ENCODE measurements at regions of chr16 and their contacts with region 1.

Region 1: GRCh38 chr16:2948807-2949738 is 15.0 kb upstream of the KREMEN2 start:
- DNase-seq: peak in 1 of 9 experiments; percentile 7
- ATAC-seq: no peak
- H3K4me3 ChIP-seq: no peak overlapping the region
- H3K4me3 Mint-ChIP-seq: no peak overlapping the region
- H3K27ac ChIP-seq: no peak overlapping the region
- H3K27ac Mint-ChIP-seq: no peak overlapping the region
- H3K4me1 ChIP-seq: no peaks in the 10 kb centered on the region
- H3K4me1 Mint-ChIP-seq: no peaks in the 10 kb centered on the region
- H3K27me3 ChIP-seq: peaks cover 0 to 2% of the 10 kb centered on the region in 2 experiments
- H3K27me3 Mint-ChIP-seq: no peaks in the 10 kb centered on the region
- CTCF ChIP-seq: no peak

Region 2: DNA sequence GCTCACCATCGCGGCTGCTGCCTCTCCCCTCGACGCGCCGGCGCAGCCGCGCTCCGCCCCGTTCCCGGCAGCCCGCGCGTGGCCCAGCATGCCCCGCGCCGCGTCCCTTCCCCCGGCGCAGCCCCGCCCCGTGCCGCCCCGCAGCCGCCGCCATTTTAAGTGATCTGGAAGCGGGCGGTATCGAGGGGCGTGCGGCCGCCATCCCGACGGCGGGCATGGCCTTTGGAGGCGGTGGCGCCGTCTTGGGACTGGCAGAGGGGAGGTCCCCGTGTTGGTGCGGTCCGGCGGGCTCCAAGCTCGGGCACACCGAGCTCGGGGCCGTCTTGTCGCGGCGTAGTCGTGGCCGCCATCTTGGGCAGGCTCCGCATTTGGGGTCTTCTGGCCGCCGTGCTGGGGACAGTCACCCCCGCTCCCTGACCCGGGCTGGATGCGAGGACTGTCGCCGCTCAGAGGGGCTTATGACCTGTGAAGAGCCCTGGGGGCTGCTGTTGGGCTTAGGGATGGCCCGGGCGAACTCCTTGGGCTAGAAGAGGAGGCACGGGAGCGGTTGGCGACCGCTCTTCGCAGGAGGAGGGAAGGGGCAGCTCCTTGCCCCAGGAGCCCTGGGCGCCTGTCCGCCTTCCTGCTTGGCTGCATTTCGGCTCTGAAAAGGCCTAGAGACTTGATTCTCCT is 171.7 kb before region 1 on chr16 and contains the start of gene ELOB:
- CTCF ChIA-PET with region 1: no interaction called
- POLR2A ChIA-PET with region 1: no interaction called
- intact Hi-C with region 1: no loop called
- DNase-seq: peak; percentile 78 to 94 (median 88)
- ATAC-seq: peak; percentile 90
- H3K4me3 ChIP-seq: peak within 1 kb of the TSS; percentile 84 to 92
- H3K4me3 Mint-ChIP-seq: peak within 1 kb of the TSS; percentile 95
- H3K27ac ChIP-seq: peak within 1 kb of the TSS; percentile 96 to 99
- H3K27ac Mint-ChIP-seq: peak within 1 kb of the TSS; percentile 98
- H3K4me1 ChIP-seq: peaks cover 30% of the 10 kb centered on the region
- H3K4me1 Mint-ChIP-seq: peaks cover 50% of the 10 kb centered on the region
- H3K27me3 ChIP-seq: no peaks in the 10 kb centered on the region
- H3K27me3 Mint-ChIP-seq: no peaks in the 10 kb centered on the region
- CTCF ChIP-seq: no peak
- total RNA-seq, gene ELOB: 70.3 to 71.5 TPM

Region 3: DNA sequence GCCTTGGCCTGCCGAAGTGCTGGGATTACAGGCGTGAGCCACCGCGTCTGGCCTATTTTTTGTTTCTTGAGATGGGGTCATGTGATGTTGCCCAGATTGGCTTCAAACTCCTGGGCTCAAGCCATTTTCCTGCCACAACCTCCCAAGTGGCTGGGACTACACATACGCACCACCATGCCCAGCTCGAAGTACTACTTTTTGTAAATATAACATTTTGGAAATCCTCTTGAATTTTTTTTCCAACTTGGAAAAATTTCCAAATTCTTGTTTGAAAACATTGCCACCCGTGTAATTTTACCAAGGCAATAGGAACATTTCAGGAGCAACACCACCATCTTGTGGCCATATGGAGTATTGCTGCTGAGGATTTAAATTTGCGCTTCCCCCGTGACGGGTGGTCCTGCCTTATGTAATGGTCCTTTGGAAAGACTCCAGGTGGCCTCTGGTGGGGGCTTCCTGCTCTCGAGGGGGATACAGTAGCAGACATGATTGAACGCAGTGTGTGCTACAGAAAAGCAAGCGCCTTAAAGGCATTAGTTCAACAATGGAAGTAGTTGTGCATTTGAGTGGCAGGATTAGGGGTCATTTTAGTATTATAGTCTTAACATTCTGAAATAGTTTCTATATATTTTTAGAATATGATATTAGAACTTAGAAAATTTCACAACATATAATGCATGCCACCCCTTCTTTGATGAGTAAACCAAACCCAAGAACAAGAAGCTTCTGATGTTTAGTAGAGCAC is 29.4 kb before region 1 on chr16:
- CTCF ChIA-PET with region 1: no interaction called
- POLR2A ChIA-PET with region 1: no interaction called
- intact Hi-C with region 1: no loop called
- DNase-seq: peak; percentile 38 to 84 (median 67)
- ATAC-seq: peak; percentile 86
- H3K4me3 ChIP-seq: no peak overlapping the region
- H3K4me3 Mint-ChIP-seq: no peak overlapping the region
- H3K27ac ChIP-seq: no peak overlapping the region
- H3K27ac Mint-ChIP-seq: no peak overlapping the region
- H3K4me1 ChIP-seq: no peaks in the 10 kb centered on the region
- H3K4me1 Mint-ChIP-seq: peaks cover 5% of the 10 kb centered on the region
- H3K27me3 ChIP-seq: no peaks in the 10 kb centered on the region
- H3K27me3 Mint-ChIP-seq: no peaks in the 10 kb centered on the region
- CTCF ChIP-seq: peak; percentile 96

Region 4: GRCh38 chr16:2963723-2964474 is 14.8 kb after region 1 on chr16 and contains the start of gene KREMEN2:
- CTCF ChIA-PET with region 1: interaction called, 10 read pairs
- POLR2A ChIA-PET with region 1: no interaction called
- intact Hi-C with region 1: no loop called
- DNase-seq: peak in 3 of 9 experiments; percentile 16 to 58 (median 48)
- ATAC-seq: peak; percentile 23
- H3K4me3 ChIP-seq: peak within 1 kb of the TSS; percentile 33 to 46
- H3K4me3 Mint-ChIP-seq: peak within 1 kb of the TSS; percentile 81
- H3K27ac ChIP-seq: no peak within 1 kb of the TSS
- H3K27ac Mint-ChIP-seq: no peak within 1 kb of the TSS
- H3K4me1 ChIP-seq: peaks cover 58% of the 10 kb centered on the region
- H3K4me1 Mint-ChIP-seq: peaks cover 35% of the 10 kb centered on the region
- H3K27me3 ChIP-seq: peaks cover 27 to 48% of the 10 kb centered on the region in 2 experiments
- H3K27me3 Mint-ChIP-seq: peaks cover 30% of the 10 kb centered on the region
- CTCF ChIP-seq: no peak
- total RNA-seq, gene KREMEN2: not detected

Region 5: DNA sequence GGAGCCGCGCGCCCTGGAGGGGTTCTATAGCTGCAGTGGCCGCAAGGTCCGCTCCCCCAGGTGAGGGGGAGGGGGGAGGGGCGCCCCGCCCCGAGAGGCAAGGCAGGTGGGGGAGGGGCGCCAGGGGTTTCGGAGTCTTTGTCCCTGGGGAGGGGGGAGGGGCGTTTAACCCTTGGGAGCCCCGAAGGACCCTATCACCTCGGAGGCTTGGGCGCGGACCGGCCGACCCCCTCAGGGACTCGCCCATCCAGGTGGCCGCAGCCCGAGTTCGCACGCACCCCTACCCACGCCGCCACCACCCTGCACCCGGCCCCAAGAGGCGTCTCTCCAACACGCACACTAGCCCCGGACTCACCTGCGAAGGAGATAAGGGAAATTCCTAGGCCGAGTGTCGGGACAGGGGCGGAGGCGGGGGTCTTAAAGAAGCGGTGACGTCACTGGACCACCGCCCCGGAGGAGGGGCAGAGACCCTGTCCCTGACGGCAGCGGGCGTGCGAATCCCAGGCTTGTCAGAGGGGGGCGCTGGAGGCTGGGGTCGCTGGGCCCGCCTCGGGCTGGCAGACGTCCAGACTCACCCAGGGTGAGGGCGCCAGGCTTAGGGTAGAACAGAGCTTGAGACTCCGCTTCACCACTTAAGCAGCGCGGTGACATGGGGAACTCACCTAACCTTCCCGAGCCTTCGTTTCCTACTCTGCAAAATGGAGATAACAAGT is 68.9 kb after region 1 on chr16 and contains the start of gene CLDN6:
- CTCF ChIA-PET with region 1: no interaction called
- POLR2A ChIA-PET with region 1: no interaction called
- intact Hi-C with region 1: no loop called
- DNase-seq: peak in 4 of 9 experiments; percentile 35 to 55 (median 47)
- ATAC-seq: no peak
- H3K4me3 ChIP-seq: no peak within 1 kb of the TSS
- H3K4me3 Mint-ChIP-seq: peak within 1 kb of the TSS; percentile 22
- H3K27ac ChIP-seq: no peak within 1 kb of the TSS
- H3K27ac Mint-ChIP-seq: no peak within 1 kb of the TSS
- H3K4me1 ChIP-seq: peaks cover 47% of the 10 kb centered on the region
- H3K4me1 Mint-ChIP-seq: peaks cover 35% of the 10 kb centered on the region
- H3K27me3 ChIP-seq: peaks cover 3 to 10% of the 10 kb centered on the region in 2 experiments
- H3K27me3 Mint-ChIP-seq: peaks cover 5% of the 10 kb centered on the region
- CTCF ChIP-seq: no peak
- total RNA-seq, gene CLDN6: not detected

Measured in CD8-positive, alpha-beta T cell (primary cell).